K562 (cell line): ENCODE measurements at regions of chr16 and their contacts with region 1.

Region 1: GRCh38 chr16:87278191-87279095 is 38.7 kb downstream of the C16orf95 start:
- DNase-seq: peak; percentile 71 to 82 (median 80)
- ATAC-seq: peak; percentile 100
- H3K4me3 ChIP-seq: no peak overlapping the region
- H3K27ac ChIP-seq: no peak overlapping the region
- H3K4me1 ChIP-seq: peaks cover 0 to 13% of the 10 kb centered on the region in 2 experiments; a peak in 2 of 5 replicates
- H3K27me3 ChIP-seq: no peaks in the 10 kb centered on the region
- CTCF ChIP-seq: peak; percentile 89 to 92 (median 90)
- EP300 ChIP-seq: no peak
- POLR2A ChIP-seq: no peak
- RAD21 ChIP-seq: peak; percentile 68 to 82

Region 2: GRCh38 chr16:87062569-87063442 is 215.6 kb before region 1 on chr16:
- CTCF ChIA-PET with region 1: interaction called, 4 read pairs
- POLR2A ChIA-PET with region 1: no interaction called
- in situ Hi-C with region 1: no loop called
- intact Hi-C with region 1: loop called (anchors 5 kb)
- DNase-seq: peak; percentile 81 to 96 (median 94)
- ATAC-seq: peak; percentile 96
- H3K4me3 ChIP-seq: no peak overlapping the region
- H3K27ac ChIP-seq: no peak overlapping the region
- H3K4me1 ChIP-seq: peaks cover 0 to 5% of the 10 kb centered on the region in 2 experiments; a peak in 1 of 5 replicates
- H3K27me3 ChIP-seq: peaks cover 37 to 41% of the 10 kb centered on the region in 2 experiments
- CTCF ChIP-seq: peak; percentile 85 to 86 (median 86)
- EP300 ChIP-seq: no peak
- POLR2A ChIP-seq: no peak
- RAD21 ChIP-seq: peak; percentile 66 to 81

Region 3: DNA sequence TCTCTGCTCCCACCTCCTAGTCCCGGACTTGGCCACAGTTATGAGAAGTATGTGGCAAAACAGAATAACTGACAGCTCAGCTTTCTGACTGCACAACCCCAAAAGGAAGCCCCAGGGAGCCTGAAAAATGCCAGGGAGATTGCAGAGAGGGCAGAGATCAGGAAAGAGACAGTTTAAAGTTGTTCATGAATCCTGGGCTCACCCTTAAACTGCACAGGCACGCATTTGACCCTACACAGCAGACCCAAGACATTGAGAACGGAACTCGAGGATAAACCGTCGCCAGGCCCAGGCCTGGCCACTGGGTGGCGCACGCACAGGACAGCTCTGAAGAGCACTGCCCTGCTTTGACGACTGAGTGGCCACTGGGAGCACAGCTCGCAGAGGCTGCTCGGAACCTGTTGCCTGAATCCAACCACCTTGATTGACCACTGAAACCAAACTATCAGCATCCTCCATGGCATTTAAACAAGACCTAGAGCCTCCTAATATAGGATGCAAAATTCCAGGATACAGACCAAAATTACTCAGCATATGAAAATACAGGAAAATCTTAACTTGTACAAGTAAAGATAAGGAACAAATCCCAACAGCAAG is 75.3 kb before region 1 on chr16:
- CTCF ChIA-PET with region 1: interaction called, 7 read pairs
- POLR2A ChIA-PET with region 1: no interaction called
- in situ Hi-C with region 1: no loop called
- intact Hi-C with region 1: loop called (anchors 1 kb)
- DNase-seq: peak; percentile 78 to 86 (median 80)
- ATAC-seq: peak; percentile 100
- H3K4me3 ChIP-seq: no peak overlapping the region
- H3K27ac ChIP-seq: no peak overlapping the region
- H3K4me1 ChIP-seq: no peaks in the 10 kb centered on the region
- H3K27me3 ChIP-seq: peaks cover 0 to 25% of the 10 kb centered on the region in 2 experiments; a peak in 1 of 5 replicates
- CTCF ChIP-seq: peak; percentile 93 to 98 (median 97)
- EP300 ChIP-seq: no peak
- POLR2A ChIP-seq: no peak
- RAD21 ChIP-seq: peak; percentile 21 to 77; a peak in 3 of 4 replicates